Left ventricle myocardium inferior (tissue), 1 donor: ENCODE measurements at regions of chr12 and their contacts with region 1.

Region 1: DNA sequence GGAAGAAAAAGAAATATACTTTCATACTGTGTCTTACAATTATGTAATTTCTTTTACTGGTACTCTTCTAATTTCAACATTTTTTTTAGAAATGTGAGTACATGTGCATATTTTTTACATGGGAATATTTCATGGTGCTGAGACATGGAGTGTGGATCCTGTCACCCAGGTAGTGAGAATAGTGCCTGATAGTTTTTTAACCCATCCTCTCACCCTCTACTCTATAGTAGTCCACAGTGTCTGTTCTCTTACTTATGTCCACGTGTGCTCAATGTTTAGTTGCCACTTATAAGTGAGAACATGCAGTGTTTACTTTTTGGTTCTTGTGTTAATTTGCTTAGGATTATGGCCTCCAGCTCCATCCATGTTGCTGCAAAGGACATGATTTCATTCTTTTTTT is 548.8 kb downstream of the AACS start:
- DNase-seq: no peak
- H3K4me3 ChIP-seq: no peak overlapping the region
- H3K27ac ChIP-seq: no peak overlapping the region
- H3K4me1 ChIP-seq: no peaks in the 10 kb centered on the region
- H3K27me3 ChIP-seq: no peaks in the 10 kb centered on the region
- CTCF ChIP-seq: no peak

Region 2: DNA sequence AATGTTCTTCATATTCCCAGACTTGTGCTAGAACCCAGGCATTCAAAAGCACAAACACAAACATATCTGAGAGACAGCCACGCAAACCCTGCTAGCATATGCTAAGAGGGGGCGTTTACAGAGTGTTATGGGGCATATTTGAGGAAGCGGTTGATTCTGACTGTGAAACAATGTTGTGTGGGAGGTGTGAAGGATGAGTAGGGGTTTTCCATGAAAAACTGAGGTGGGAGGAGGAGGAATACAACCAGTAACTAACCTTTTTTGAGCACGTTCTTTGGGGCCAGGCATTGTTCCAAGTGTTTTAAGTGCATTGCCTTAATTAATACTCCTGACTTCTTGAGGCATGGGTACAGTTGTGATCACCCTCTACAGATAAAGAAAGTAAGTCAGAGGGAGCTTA is 49.3 kb before region 1 on chr12:
- intact Hi-C with region 1: no loop called
- DNase-seq: no peak
- H3K4me3 ChIP-seq: no peak overlapping the region
- H3K27ac ChIP-seq: no peak overlapping the region
- H3K4me1 ChIP-seq: no peaks in the 10 kb centered on the region
- H3K27me3 ChIP-seq: peaks cover 15% of the 10 kb centered on the region
- CTCF ChIP-seq: no peak

Region 3: GRCh38 chr12:126424696-126425095 is 810.6 kb after region 1 on chr12:
- intact Hi-C with region 1: loop called (anchors 10 kb)
- DNase-seq: no peak
- H3K4me3 ChIP-seq: no peak overlapping the region
- H3K27ac ChIP-seq: no peak overlapping the region
- H3K4me1 ChIP-seq: no peaks in the 10 kb centered on the region
- H3K27me3 ChIP-seq: peaks cover 29% of the 10 kb centered on the region
- CTCF ChIP-seq: no peak